Activated naive CD4-positive, alpha-beta T cell treated with anti-CD3 and anti-CD28 coated beads for 36 hours (primary cell): ENCODE measurements at regions of chr17 and their contacts with region 1.

Region 1: GRCh38 chr17:9291912-9292560 is 270.7 kb downstream of the NTN1 start:
- DNase-seq: peak; percentile 70
- H3K4me3 Mint-ChIP-seq: no peak overlapping the region
- H3K27ac Mint-ChIP-seq: no peak overlapping the region
- H3K4me1 Mint-ChIP-seq: peaks cover 35% of the 10 kb centered on the region
- H3K27me3 Mint-ChIP-seq: no peaks in the 10 kb centered on the region

Region 2: DNA sequence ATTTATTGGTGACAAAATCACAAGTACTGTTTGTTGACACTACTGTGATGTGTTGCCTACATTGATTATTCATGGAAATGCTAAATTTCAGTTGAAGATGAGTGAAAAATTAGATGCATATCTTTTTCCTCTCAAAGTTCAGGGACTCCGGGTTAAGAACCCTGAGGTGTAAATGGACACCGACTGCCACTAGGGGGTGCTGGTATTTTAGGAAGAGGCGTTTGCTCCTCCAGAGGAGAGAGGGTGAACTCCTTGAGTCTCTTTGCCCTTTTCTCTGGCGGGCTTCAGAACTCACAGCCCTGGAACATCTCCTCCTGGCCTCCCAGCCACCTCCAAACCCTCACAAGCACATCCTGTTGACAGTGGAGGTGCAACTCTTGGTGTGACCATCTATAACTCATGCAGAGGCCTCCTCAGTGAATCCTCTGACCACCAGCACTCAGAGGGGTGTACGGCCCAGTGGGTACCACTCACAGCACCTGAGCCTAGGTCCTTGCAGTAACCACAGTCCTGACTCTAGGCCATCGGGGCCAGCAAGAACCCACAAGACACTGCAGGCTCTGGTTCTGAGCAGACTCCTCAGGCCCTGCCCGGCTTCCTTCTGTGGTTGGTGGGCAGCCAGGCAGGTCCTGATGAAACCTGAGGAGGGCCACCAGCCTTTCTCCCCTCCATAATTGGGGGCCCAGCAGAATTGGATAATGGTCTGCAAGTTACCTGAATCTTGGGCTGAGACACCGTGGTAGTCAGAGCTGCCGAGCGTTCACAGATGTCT is 300.3 kb before region 1 on chr17:
- CTCF ChIA-PET with region 1: no interaction called
- intact Hi-C with region 1: loop called (anchors 2 kb)
- DNase-seq: peak; percentile 86
- H3K4me3 Mint-ChIP-seq: no peak overlapping the region
- H3K27ac Mint-ChIP-seq: no peak overlapping the region
- H3K4me1 Mint-ChIP-seq: peaks cover 5% of the 10 kb centered on the region
- H3K27me3 Mint-ChIP-seq: no peaks in the 10 kb centered on the region

Region 3: GRCh38 chr17:9115446-9116191 is 176.4 kb before region 1 on chr17:
- CTCF ChIA-PET with region 1: interaction called, 9 read pairs
- intact Hi-C with region 1: loop called (anchors 1 kb)
- DNase-seq: peak; percentile 69
- H3K4me3 Mint-ChIP-seq: peak overlapping the region; percentile 56
- H3K27ac Mint-ChIP-seq: no peak overlapping the region
- H3K4me1 Mint-ChIP-seq: peaks cover 4% of the 10 kb centered on the region
- H3K27me3 Mint-ChIP-seq: peaks cover 6% of the 10 kb centered on the region

Region 4: GRCh38 chr17:9239793-9240658 is 52.0 kb before region 1 on chr17:
- CTCF ChIA-PET with region 1: interaction called, 3 read pairs
- intact Hi-C with region 1: loop called (anchors 1 kb)
- DNase-seq: peak; percentile 67
- H3K4me3 Mint-ChIP-seq: peak overlapping the region; percentile 74
- H3K27ac Mint-ChIP-seq: no peak overlapping the region
- H3K4me1 Mint-ChIP-seq: peaks cover 10% of the 10 kb centered on the region
- H3K27me3 Mint-ChIP-seq: no peaks in the 10 kb centered on the region

Region 5: GRCh38 chr17:9273428-9274391 is 18.3 kb before region 1 on chr17:
- CTCF ChIA-PET with region 1: interaction called, 5 read pairs
- intact Hi-C with region 1: loop called (anchors 1 kb)
- DNase-seq: peak; percentile 65
- H3K4me3 Mint-ChIP-seq: no peak overlapping the region
- H3K27ac Mint-ChIP-seq: peak overlapping the region; percentile 82
- H3K4me1 Mint-ChIP-seq: peaks cover 24% of the 10 kb centered on the region
- H3K27me3 Mint-ChIP-seq: no peaks in the 10 kb centered on the region

Region 6: DNA sequence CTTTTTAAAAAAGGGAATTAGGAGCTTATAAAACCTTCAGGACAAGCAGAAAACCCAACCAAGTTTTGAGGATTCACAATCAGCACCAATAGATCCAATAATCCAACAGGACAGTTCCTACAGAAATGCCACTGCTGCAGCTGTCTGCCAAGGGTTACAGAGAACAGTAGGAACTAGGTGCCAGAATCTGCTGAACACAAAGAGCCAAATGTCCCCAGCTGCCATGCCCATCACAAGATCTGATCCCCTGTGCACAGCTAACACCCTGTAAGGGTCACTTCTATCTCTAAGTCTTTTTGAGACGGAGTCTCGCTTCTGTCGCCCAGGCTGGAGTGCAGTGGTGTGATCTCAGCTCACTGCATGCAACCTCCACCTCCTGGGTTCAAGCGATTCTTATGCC is 21.3 kb after region 1 on chr17:
- CTCF ChIA-PET with region 1: no interaction called
- intact Hi-C with region 1: no loop called
- DNase-seq: no peak
- H3K4me3 Mint-ChIP-seq: no peak overlapping the region
- H3K27ac Mint-ChIP-seq: no peak overlapping the region
- H3K4me1 Mint-ChIP-seq: no peaks in the 10 kb centered on the region
- H3K27me3 Mint-ChIP-seq: no peaks in the 10 kb centered on the region

Region 7: DNA sequence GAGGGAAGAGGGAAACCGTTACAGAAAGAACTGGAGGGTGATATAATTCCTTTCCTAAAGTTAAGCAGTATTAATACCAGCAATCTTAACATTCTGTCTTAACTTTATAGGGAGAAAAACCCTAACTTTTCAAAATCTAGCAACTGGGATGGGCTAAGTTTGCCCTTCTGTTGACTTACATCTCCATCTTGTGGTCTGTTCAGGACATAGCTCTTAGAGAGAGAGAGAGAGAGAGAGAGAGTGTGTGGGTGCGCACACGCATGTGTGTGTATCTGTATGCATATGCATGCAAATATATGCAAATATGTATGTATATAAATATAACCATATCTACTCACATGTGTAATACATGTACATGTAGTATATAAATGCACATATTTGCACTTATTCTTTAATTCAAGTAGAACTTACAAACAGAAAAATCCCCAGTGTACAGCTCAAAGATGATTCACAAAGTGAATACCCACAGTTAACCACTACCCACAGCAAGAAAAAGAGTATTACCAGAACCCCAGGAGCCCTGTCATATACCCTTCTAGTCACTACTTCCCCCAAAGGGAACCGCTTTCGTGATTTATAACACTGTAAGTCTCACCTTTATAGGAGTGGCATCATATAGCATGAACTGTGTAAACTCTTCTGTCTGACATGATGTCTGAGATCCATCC is 237.1 kb after region 1 on chr17:
- CTCF ChIA-PET with region 1: no interaction called
- intact Hi-C with region 1: loop called (anchors 5 kb)
- DNase-seq: peak; percentile 15
- H3K4me3 Mint-ChIP-seq: no peak overlapping the region
- H3K27ac Mint-ChIP-seq: no peak overlapping the region
- H3K4me1 Mint-ChIP-seq: peaks cover 10% of the 10 kb centered on the region
- H3K27me3 Mint-ChIP-seq: no peaks in the 10 kb centered on the region